ENCODE measurements at regions of chr17 and their contacts with region 1.

Region 1: DNA sequence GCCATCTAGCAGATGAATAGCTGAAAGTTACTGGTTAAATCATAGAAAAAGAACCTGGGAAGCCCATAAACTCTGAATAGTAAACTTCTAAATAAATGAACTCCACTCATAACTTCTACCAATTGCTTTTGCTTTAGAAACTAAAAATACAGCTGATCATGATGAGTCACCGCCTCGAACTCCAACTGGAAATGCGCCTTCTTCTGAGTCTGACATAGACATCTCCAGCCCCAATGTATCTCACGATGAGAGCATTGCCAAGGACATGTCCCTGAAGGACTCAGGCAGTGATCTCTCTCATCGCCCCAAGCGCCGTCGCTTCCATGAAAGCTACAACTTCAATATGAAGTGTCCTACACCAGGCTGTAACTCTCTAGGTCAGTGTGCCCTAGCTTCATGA is 9.7 kb downstream of the KAT7 start:
- DNase-seq: no peak
- H3K4me3 ChIP-seq: no peak overlapping the region
- H3K27ac ChIP-seq: no peak overlapping the region
- H3K4me1 ChIP-seq: no peaks in the 10 kb centered on the region
- H3K27me3 ChIP-seq: no peaks in the 10 kb centered on the region
- CTCF ChIP-seq: no peak

Region 2: GRCh38 chr17:49845321-49845720 is 47.1 kb after region 1 on chr17:
- CTCF ChIA-PET with region 1: no interaction called
- POLR2A ChIA-PET with region 1: interaction called, 10 read pairs
- intact Hi-C with region 1: no loop called
- DNase-seq: no peak
- H3K4me3 ChIP-seq: no peak overlapping the region
- H3K27ac ChIP-seq: no peak overlapping the region
- H3K4me1 ChIP-seq: no peaks in the 10 kb centered on the region
- H3K27me3 ChIP-seq: peaks cover 4% of the 10 kb centered on the region
- CTCF ChIP-seq: no peak